K562 (cell line): ENCODE measurements at regions of chr4 and their contacts with region 1.

Region 1: DNA sequence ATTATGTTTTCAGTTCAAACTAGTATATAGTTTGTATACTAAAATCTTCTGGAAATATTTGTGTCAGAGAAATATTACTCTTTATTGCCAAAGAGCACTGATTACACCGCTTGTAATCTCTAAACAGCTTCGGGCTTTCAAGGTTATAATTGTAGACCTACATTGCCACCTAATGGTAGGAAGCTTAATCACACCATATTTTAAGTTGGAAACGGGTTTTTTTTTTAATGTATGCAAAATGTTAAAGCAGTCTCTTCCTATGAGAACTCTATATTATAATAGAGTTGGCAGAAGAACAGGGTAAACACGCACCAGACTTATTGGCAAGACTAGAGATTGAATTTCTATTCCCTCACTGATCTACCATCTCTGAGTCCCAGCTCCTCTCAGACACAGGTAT is 19.5 kb upstream of the NFXL1 start:
- DNase-seq: peak; percentile 18 to 47 (median 32)
- ATAC-seq: peak; percentile 72
- H3K4me3 ChIP-seq: no peak overlapping the region
- H3K27ac ChIP-seq: no peak overlapping the region
- H3K4me1 ChIP-seq: no peaks in the 10 kb centered on the region
- H3K27me3 ChIP-seq: peaks cover 10% of the 10 kb centered on the region in 2 experiments; a peak in 2 of 5 replicates
- CTCF ChIP-seq: peak; percentile 50 to 85 (median 51); a peak in 5 of 6 replicates
- EP300 ChIP-seq: no peak
- POLR2A ChIP-seq: no peak
- RAD21 ChIP-seq: peak; percentile 67 to 81

Region 2: GRCh38 chr4:46844325-46844917 is 1089.4 kb before region 1 on chr4:
- CTCF ChIA-PET with region 1: no interaction called
- POLR2A ChIA-PET with region 1: no interaction called
- in situ Hi-C with region 1: no loop called
- intact Hi-C with region 1: loop called (anchors 10 kb)
- DNase-seq: peak; percentile 21 to 68 (median 24)
- ATAC-seq: 0 out of 3 replicates have a peak, but pooled peaks have one; percentile 43
- H3K4me3 ChIP-seq: no peak overlapping the region
- H3K27ac ChIP-seq: no peak overlapping the region
- H3K4me1 ChIP-seq: no peaks in the 10 kb centered on the region
- H3K27me3 ChIP-seq: no peaks in the 10 kb centered on the region
- CTCF ChIP-seq: peak; percentile 37 to 61 (median 57); a peak in 5 of 6 replicates
- EP300 ChIP-seq: no peak
- POLR2A ChIP-seq: no peak
- RAD21 ChIP-seq: peak; percentile 51 to 72

Region 3: DNA sequence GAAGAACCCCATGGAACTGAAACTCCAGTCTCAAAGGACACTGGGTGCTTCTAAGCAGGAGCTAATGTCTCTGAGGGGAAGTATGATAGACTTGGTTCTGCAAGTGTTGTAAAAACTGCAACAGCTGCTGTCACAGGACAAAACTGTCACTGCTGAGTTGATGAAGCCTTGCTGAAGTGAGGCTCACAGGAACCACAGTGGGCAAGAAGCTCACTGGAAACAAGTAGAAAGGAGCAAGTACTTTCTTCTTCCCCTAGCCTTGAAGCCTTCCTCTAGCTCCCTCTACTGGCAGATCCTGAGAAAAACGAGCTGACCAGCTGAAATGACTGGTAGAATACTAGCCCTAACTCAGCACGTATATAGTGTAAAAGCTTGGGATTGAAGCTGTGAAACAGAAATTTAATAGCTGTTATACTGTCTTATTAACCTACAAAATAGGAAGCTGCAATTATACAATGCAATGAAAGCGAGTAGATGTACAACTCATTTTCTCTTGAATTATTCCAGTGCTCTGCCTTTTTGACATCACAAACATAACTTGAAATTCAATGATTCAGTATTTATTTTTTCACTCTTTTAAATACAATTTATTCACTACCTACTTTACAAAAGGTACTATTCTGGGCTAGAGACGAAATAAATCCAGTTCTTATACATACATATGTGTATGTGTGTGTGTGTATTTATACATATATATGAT is 811.1 kb before region 1 on chr4:
- CTCF ChIA-PET with region 1: no interaction called
- POLR2A ChIA-PET with region 1: no interaction called
- in situ Hi-C with region 1: no loop called
- intact Hi-C with region 1: loop called (anchors 10 kb)
- DNase-seq: peak; percentile 34 to 64 (median 39)
- ATAC-seq: peak; percentile 66
- H3K4me3 ChIP-seq: no peak overlapping the region
- H3K27ac ChIP-seq: no peak overlapping the region
- H3K4me1 ChIP-seq: no peaks in the 10 kb centered on the region
- H3K27me3 ChIP-seq: no peaks in the 10 kb centered on the region
- CTCF ChIP-seq: peak; percentile 33 to 73 (median 57); a peak in 5 of 6 replicates
- EP300 ChIP-seq: no peak
- POLR2A ChIP-seq: no peak
- RAD21 ChIP-seq: peak in 1 of 2 experiments; percentile 44; a peak in 1 of 4 replicates

Region 4: DNA sequence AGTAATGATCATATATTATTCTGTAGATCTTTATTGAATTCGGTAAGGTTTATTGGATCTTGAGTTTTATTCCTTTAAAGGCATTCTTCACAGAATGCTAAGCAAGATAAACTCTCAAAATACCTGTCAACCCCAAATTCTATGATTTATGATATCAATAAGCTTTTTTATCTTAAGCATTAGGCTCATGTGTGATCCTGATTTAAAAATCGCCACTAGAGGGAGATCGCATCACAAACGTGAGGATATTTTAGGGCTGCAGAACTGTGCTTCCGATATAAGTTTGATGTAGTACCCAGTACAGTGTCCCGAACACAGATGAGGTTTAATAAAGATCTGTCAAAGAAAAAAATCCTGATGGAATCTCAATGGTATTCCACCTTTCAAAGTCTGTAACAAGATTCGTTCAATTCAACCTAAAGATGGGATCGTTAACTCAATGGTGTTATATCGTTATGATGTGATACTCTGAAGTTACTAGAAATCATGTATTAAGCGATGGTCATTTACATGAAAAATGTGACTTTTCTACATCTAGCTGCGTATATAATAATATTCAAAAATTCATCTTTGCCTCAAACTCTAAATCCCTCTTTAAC is 264.9 kb before region 1 on chr4:
- CTCF ChIA-PET with region 1: interaction called, 5 read pairs
- POLR2A ChIA-PET with region 1: interaction called, 3 read pairs
- in situ Hi-C with region 1: no loop called
- intact Hi-C with region 1: loop called (anchors 1 kb)
- DNase-seq: peak; percentile 15 to 57 (median 48)
- ATAC-seq: peak; percentile 87
- H3K4me3 ChIP-seq: no peak overlapping the region
- H3K27ac ChIP-seq: no peak overlapping the region
- H3K4me1 ChIP-seq: no peaks in the 10 kb centered on the region
- H3K27me3 ChIP-seq: peaks cover 0 to 4% of the 10 kb centered on the region in 2 experiments; a peak in 1 of 5 replicates
- CTCF ChIP-seq: peak; percentile 43 to 64 (median 62); a peak in 5 of 6 replicates
- EP300 ChIP-seq: no peak
- POLR2A ChIP-seq: no peak
- RAD21 ChIP-seq: peak; percentile 50 to 57

Region 5: GRCh38 chr4:47686294-47686872 is 247.5 kb before region 1 on chr4:
- CTCF ChIA-PET with region 1: interaction called, 10 read pairs
- POLR2A ChIA-PET with region 1: interaction called, 4 read pairs
- in situ Hi-C with region 1: no loop called
- intact Hi-C with region 1: loop called (anchors 2 kb)
- DNase-seq: peak; percentile 58 to 69 (median 63)
- ATAC-seq: peak; percentile 97
- H3K4me3 ChIP-seq: no peak overlapping the region
- H3K27ac ChIP-seq: no peak overlapping the region
- H3K4me1 ChIP-seq: no peaks in the 10 kb centered on the region
- H3K27me3 ChIP-seq: no peaks in the 10 kb centered on the region
- CTCF ChIP-seq: peak; percentile 79 to 84 (median 83)
- EP300 ChIP-seq: no peak
- POLR2A ChIP-seq: no peak
- RAD21 ChIP-seq: peak; percentile 64 to 73

Region 6: GRCh38 chr4:47704693-47705325 is 229.0 kb before region 1 on chr4:
- CTCF ChIA-PET with region 1: interaction called, 5 read pairs
- POLR2A ChIA-PET with region 1: no interaction called
- in situ Hi-C with region 1: loop called (anchors 10 kb)
- intact Hi-C with region 1: loop called (anchors 5 kb)
- DNase-seq: peak in 2 of 4 experiments; percentile 14 to 34
- ATAC-seq: peak; percentile 94
- H3K4me3 ChIP-seq: no peak overlapping the region
- H3K27ac ChIP-seq: no peak overlapping the region
- H3K4me1 ChIP-seq: no peaks in the 10 kb centered on the region
- H3K27me3 ChIP-seq: peaks cover 0 to 10% of the 10 kb centered on the region in 2 experiments; a peak in 2 of 5 replicates
- CTCF ChIP-seq: peak; percentile 43 to 52 (median 51)
- EP300 ChIP-seq: no peak
- POLR2A ChIP-seq: no peak
- RAD21 ChIP-seq: peak; percentile 29 to 61; a peak in 2 of 4 replicates